Transverse colon (tissue), 4 donors: ENCODE measurements at regions of chr3 and their contacts with region 1.

Region 1: GRCh38 chr3:50358911-50359759 is at the start of gene TMEM115:
- DNase-seq: peak; percentile 97
- H3K4me3 ChIP-seq: peak within 1 kb of the TSS; percentile 75 to 91 (median 87)
- H3K27ac ChIP-seq: peak within 1 kb of the TSS; percentile 90 to 96 (median 90)
- H3K4me1 ChIP-seq: peaks cover 29 to 37% (median 36%) of the 10 kb centered on the region in 4 donors
- H3K27me3 ChIP-seq: no peaks in the 10 kb centered on the region
- CTCF ChIP-seq: no peak
- EP300 ChIP-seq: no peak
- POLR2A ChIP-seq: peak; percentile 82
- total RNA-seq, gene TMEM115: 71.8 to 103 (median 81.9) TPM

Region 2: DNA sequence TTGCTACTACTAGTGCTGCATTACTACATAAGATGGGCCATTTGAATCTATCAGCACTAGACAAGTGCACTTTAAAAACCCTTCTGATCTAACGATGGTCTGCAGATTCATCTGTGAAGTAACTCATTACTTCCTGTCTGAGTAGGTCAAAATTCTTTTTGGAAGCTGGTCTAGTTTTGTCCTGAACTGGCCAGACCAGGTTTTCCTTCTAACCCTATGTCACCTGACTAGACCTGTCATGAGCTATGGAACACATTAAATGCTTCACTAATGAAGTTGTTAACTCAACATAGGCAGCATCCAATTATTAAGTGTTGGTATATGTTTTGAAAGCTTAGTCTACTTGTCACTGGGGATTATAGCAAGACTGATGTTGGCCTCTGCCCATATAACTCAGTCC is 280.5 kb before region 1 on chr3:
- in situ Hi-C with region 1: no loop called
- intact Hi-C with region 1: no loop called
- DNase-seq: no peak
- H3K4me3 ChIP-seq: no peak overlapping the region
- H3K27ac ChIP-seq: no peak overlapping the region
- H3K4me1 ChIP-seq: peaks cover 0 to 11% (median 1%) of the 10 kb centered on the region in 4 donors
- H3K27me3 ChIP-seq: no peaks in the 10 kb centered on the region
- CTCF ChIP-seq: no peak
- EP300 ChIP-seq: no peak
- POLR2A ChIP-seq: no peak

Region 3: DNA sequence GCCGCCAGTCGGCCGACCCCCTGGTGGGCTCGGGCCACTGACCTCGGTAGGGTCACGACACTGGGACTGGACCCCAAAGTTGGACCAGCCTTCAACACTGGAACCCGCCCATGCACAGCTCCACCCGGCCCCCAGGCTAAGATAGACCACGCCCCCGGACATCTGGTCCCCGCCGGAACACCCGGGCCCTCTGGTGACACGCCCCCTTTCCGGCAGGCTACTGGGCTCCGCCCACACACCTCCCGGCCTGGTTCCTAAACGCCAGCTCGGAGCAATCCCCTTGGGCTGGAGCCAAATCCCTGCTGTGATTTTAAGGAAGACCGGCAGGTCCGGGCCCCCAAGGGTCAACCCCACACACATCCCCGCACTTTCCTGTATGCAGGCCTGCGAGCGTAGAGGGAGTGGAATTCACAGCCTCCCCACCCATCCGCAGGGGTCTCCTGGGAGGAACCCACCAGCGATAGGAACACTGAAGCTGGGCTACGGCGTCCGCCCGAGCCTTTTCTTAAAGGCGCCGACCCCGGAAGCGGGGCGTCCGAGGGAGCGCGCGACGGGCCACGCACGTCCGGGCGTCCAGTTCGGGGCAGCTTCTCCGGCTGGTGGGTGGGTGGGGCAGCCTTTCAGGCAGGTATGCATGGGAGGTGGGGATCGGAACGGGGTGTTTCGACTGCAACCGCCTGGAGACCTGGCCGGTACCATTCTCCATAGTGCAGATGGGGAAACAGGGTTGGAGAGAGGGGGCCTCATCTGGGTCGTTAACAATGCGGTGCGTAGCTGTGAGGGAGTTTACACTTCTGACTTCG is 210.0 kb after region 1 on chr3 and contains the start of gene HEMK1:
- in situ Hi-C with region 1: loop called in 1 of 4 experiments (anchors 25 kb)
- intact Hi-C with region 1: no loop called
- DNase-seq: peak; percentile 99
- H3K4me3 ChIP-seq: peak within 1 kb of the TSS; percentile 59 to 94 (median 73)
- H3K27ac ChIP-seq: peak within 1 kb of the TSS; percentile 89 to 98 (median 92)
- H3K4me1 ChIP-seq: peaks cover 8 to 33% (median 26%) of the 10 kb centered on the region in 4 donors
- H3K27me3 ChIP-seq: no peaks in the 10 kb centered on the region
- CTCF ChIP-seq: peak in 1 of 5 experiments; percentile 10
- EP300 ChIP-seq: no peak
- POLR2A ChIP-seq: peak; percentile 86
- total RNA-seq, gene HEMK1: 7.3 to 11.6 (median 7.9) TPM

Region 4: DNA sequence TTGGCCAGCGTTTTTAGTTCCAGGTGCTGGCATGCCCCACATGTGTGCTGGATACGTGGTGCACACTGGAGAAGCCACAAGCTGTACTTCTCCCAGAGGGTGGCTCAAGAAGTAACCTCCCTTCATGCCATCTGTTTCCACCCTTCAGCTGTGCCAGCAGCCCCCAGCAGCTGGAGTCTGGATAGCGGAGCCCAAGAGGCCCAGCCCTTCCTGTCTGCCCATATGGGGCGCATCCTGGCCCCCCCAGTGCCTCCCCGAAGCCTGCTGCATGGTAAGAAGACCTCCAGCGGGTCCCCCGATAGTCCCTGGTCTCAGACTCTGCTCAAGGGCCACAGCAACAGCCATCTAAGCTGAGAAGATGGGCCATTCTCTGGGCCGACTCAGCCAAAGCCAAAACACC is 1020.2 kb after region 1 on chr3:
- in situ Hi-C with region 1: no loop called
- intact Hi-C with region 1: no loop called
- DNase-seq: no peak
- H3K4me3 ChIP-seq: no peak overlapping the region
- H3K27ac ChIP-seq: no peak overlapping the region
- H3K4me1 ChIP-seq: peaks cover 0 to 9% (median 7%) of the 10 kb centered on the region in 4 donors
- H3K27me3 ChIP-seq: no peaks in the 10 kb centered on the region
- CTCF ChIP-seq: no peak
- EP300 ChIP-seq: no peak
- POLR2A ChIP-seq: no peak